MCF 10A (cell line): ENCODE measurements at regions of chr2 and their contacts with region 1.

Region 1: DNA sequence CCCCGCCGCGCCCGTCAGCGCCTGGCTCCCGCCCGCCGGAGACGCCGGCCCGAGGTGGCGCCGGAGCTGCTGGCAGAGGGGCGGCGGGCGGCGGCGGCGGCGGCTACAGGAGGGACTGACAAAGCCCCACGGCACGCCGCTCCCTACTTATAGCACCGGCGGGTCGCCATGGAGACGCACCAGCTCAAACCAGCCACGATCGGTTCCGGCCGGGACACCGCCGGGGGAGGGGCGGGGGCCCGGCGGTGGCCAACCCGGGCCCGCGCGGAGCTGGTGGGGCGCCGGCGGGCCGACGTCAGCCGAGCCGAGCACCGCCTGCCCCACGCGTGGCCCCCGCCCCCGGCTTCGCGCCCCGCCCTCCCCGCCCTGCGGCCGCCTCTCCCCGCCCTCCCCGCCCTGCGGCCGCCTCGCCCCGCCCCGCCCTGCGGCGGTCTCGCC is at the start of gene ODC1:
- DNase-seq: peak; percentile 86
- H3K4me3 Mint-ChIP-seq: peak within 1 kb of the TSS; percentile 93
- H3K27ac Mint-ChIP-seq: peak within 1 kb of the TSS; percentile 91
- H3K4me1 Mint-ChIP-seq: peaks cover 14% of the 10 kb centered on the region
- H3K27me3 Mint-ChIP-seq: no peaks in the 10 kb centered on the region
- CTCF ChIP-seq: no peak
- total RNA-seq, gene ODC1: 321 and 341 TPM in 2 replicates

Region 2: GRCh38 chr2:10087360-10087759 is 360.9 kb before region 1 on chr2:
- CTCF ChIA-PET with region 1: no interaction called
- POLR2A ChIA-PET with region 1: no interaction called
- intact Hi-C with region 1: no loop called
- DNase-seq: no peak
- H3K4me3 Mint-ChIP-seq: no peak overlapping the region
- H3K27ac Mint-ChIP-seq: no peak overlapping the region
- H3K4me1 Mint-ChIP-seq: no peaks in the 10 kb centered on the region
- H3K27me3 Mint-ChIP-seq: peaks cover 39% of the 10 kb centered on the region
- CTCF ChIP-seq: no peak

Region 3: DNA sequence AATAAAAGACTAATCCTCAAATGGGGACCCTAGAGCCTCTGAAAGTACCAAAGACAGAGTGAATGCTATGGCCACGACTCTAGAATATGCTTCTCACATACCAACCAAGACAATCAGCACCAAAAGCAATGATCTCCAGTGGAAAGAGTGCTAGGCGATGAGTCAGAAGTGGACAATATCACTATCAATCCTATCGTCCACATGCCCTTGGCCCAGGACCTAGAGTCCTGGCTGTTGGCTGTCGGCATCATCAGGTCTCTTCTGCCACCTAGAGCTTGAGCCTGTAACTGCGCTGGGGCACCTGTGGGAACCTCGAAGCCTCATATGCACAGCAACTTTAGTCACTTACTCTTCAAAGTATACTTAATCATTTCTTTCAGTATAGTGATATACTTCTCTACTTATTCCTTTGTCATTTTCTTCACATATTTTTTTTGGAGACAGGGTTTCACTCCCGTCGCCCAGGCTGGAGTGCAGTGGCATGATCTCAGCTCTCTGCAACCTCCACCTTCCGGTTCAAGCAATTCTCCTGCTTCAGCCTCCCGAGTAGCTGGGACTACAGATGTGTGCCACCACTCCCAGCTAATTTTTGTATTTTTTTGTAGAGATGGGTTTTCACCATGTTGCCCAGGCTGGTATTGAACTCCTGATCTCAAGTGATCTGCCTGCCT is 211.8 kb after region 1 on chr2:
- CTCF ChIA-PET with region 1: interaction called, 5 read pairs
- POLR2A ChIA-PET with region 1: interaction called, 3 read pairs
- intact Hi-C with region 1: loop called (anchors 2 kb)
- DNase-seq: peak; percentile 77
- H3K4me3 Mint-ChIP-seq: no peak overlapping the region
- H3K27ac Mint-ChIP-seq: no peak overlapping the region
- H3K4me1 Mint-ChIP-seq: peaks cover 13% of the 10 kb centered on the region
- H3K27me3 Mint-ChIP-seq: no peaks in the 10 kb centered on the region
- CTCF ChIP-seq: peak; percentile 75

Region 4: GRCh38 chr2:11477994-11478393 is 1029.8 kb after region 1 on chr2:
- CTCF ChIA-PET with region 1: no interaction called
- POLR2A ChIA-PET with region 1: no interaction called
- intact Hi-C with region 1: no loop called
- DNase-seq: peak; percentile 93
- H3K4me3 Mint-ChIP-seq: no peak overlapping the region
- H3K27ac Mint-ChIP-seq: no peak overlapping the region
- H3K4me1 Mint-ChIP-seq: peaks cover 2% of the 10 kb centered on the region
- H3K27me3 Mint-ChIP-seq: peaks cover 27% of the 10 kb centered on the region
- CTCF ChIP-seq: peak; percentile 77